ENCODE measurements at regions of chr12 and their contacts with region 1.

Region 1: GRCh38 chr12:113422030-113422885 is at the start of gene SDSL:
- DNase-seq: peak; percentile 48
- ATAC-seq: peak; percentile 70
- H3K4me3 ChIP-seq: peak within 1 kb of the TSS; percentile 64 to 77 (median 65)
- H3K27ac ChIP-seq: peak within 1 kb of the TSS; percentile 34
- H3K4me1 ChIP-seq: peaks cover 52% of the 10 kb centered on the region
- H3K27me3 ChIP-seq: no peaks in the 10 kb centered on the region
- CTCF ChIP-seq: no peak
- EP300 ChIP-seq: no peak
- POLR2A ChIP-seq: peak in 1 of 2 experiments; percentile 56; a peak in 2 of 4 replicates
- RAD21 ChIP-seq: no peak
- total RNA-seq, gene SDSL: 1.2 and 1.3 TPM in 2 replicates

Region 2: GRCh38 chr12:113292091-113292490 is 130.2 kb before region 1 on chr12:
- CTCF ChIA-PET with region 1: no interaction called
- POLR2A ChIA-PET with region 1: no interaction called
- in situ Hi-C with region 1: no loop called
- intact Hi-C with region 1: no loop called
- DNase-seq: no peak
- ATAC-seq: no peak
- H3K4me3 ChIP-seq: no peak overlapping the region
- H3K27ac ChIP-seq: no peak overlapping the region
- H3K4me1 ChIP-seq: peaks cover 4% of the 10 kb centered on the region
- H3K27me3 ChIP-seq: no peaks in the 10 kb centered on the region
- CTCF ChIP-seq: no peak
- EP300 ChIP-seq: no peak
- POLR2A ChIP-seq: no peak
- RAD21 ChIP-seq: no peak

Region 3: DNA sequence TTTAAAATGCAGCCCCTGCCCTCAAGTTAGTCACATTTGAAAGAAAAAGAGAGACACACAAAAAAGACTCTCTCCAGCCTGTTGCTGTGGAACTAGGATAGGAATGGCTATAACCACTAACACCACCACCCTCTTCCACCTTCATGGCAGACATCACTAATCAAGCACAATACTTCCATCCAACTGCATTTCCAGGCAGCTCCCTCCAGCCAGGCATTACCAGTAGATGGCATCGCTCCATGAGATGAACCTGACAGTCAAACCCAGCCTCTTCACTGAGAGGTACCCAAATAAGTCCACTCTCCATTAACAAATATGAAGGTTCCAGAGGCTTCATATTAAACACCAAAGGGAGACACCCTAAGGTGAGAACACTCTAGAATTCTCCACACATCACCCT is 111.8 kb before region 1 on chr12:
- CTCF ChIA-PET with region 1: interaction called, 18 read pairs
- POLR2A ChIA-PET with region 1: no interaction called
- in situ Hi-C with region 1: loop called (anchors 5 kb)
- intact Hi-C with region 1: loop called (anchors 1 kb)
- DNase-seq: peak; percentile 15
- ATAC-seq: no peak
- H3K4me3 ChIP-seq: no peak overlapping the region
- H3K27ac ChIP-seq: no peak overlapping the region
- H3K4me1 ChIP-seq: no peaks in the 10 kb centered on the region
- H3K27me3 ChIP-seq: no peaks in the 10 kb centered on the region
- CTCF ChIP-seq: peak; percentile 52
- EP300 ChIP-seq: no peak
- POLR2A ChIP-seq: no peak
- RAD21 ChIP-seq: no peak

Measured in HepG2 (cell line).